ENCODE measurements at regions of chr1 and their contacts with region 1.

Region 1: DNA sequence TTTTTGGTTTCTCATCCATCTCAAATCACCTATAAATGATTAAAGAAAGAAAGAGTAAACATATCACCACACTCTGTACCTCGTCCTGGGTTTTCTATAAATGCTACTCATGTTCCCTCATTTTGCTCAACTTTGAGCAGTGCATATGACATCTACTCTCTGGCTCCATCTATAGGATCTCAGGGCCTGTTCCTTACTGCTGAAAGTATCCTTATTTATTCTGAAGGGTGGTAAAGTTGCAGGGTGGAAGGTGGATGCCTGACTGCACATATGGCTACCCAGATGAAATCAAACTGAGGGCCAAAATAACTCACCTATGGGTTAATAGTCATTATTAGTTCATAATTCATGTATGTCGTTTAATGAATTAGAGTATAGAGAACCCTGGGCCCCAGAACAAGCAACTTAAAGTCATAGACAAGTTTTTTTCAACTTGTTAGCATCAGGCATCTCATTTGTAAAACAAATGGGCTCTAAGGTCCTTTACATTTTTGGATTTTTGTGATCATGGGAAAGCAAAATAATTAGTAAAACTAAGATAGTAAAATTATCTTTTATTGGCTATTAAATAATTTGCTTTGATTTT is 46.5 kb downstream of the NCF2 start:
- DNase-seq: peak; percentile 77
- H3K4me3 Mint-ChIP-seq: no peak overlapping the region
- H3K27ac Mint-ChIP-seq: peak overlapping the region; percentile 12
- H3K4me1 Mint-ChIP-seq: peaks cover 12% of the 10 kb centered on the region
- H3K27me3 Mint-ChIP-seq: no peaks in the 10 kb centered on the region

Region 2: GRCh38 chr1:183554577-183554976 is 10.9 kb after region 1 on chr1:
- intact Hi-C with region 1: no loop called
- DNase-seq: no peak
- H3K4me3 Mint-ChIP-seq: no peak overlapping the region
- H3K27ac Mint-ChIP-seq: peak overlapping the region; percentile 37
- H3K4me1 Mint-ChIP-seq: peaks cover 3% of the 10 kb centered on the region
- H3K27me3 Mint-ChIP-seq: no peaks in the 10 kb centered on the region

Region 3: GRCh38 chr1:183567584-183567983 is 23.9 kb after region 1 on chr1:
- intact Hi-C with region 1: no loop called
- DNase-seq: no peak
- H3K4me3 Mint-ChIP-seq: no peak overlapping the region
- H3K27ac Mint-ChIP-seq: peak overlapping the region; percentile 64
- H3K4me1 Mint-ChIP-seq: peaks cover 19% of the 10 kb centered on the region
- H3K27me3 Mint-ChIP-seq: no peaks in the 10 kb centered on the region

Region 4: GRCh38 chr1:183622884-183623785 is 79.4 kb after region 1 on chr1:
- intact Hi-C with region 1: loop called (anchors 1 kb)
- DNase-seq: peak; percentile 86
- H3K4me3 Mint-ChIP-seq: no peak overlapping the region
- H3K27ac Mint-ChIP-seq: peak overlapping the region; percentile 2
- H3K4me1 Mint-ChIP-seq: peaks cover 10% of the 10 kb centered on the region
- H3K27me3 Mint-ChIP-seq: no peaks in the 10 kb centered on the region